Activated naive CD4-positive, alpha-beta T cell treated with anti-CD3 and anti-CD28 coated beads for 36 hours (primary cell): ENCODE measurements at regions of chr9 and their contacts with region 1.

Region 1: DNA sequence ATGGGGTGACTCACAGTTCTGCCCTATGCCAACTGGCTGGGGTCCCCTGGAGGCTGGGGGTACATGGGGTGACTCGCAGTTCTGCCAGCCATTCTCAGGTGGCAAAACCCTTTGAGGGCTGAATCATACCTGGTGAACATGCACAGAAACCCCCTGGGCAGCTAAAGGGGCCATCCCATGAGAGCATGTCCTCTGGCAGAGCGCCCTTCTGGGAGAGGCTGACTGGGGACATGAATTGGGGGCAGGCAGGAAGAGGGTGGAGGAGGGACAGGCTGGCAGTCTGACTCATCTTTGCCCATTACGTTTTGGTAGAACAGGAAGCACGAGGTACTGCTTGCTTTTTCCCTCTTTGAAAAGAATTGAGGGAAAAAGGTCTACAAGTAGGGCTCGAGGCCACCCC is 16.7 kb downstream of the TRAF1 start:
- DNase-seq: peak; percentile 89
- H3K4me3 Mint-ChIP-seq: no peak overlapping the region
- H3K27ac Mint-ChIP-seq: peak overlapping the region; percentile 94
- H3K4me1 Mint-ChIP-seq: peaks cover 91% of the 10 kb centered on the region
- H3K27me3 Mint-ChIP-seq: no peaks in the 10 kb centered on the region

Region 2: DNA sequence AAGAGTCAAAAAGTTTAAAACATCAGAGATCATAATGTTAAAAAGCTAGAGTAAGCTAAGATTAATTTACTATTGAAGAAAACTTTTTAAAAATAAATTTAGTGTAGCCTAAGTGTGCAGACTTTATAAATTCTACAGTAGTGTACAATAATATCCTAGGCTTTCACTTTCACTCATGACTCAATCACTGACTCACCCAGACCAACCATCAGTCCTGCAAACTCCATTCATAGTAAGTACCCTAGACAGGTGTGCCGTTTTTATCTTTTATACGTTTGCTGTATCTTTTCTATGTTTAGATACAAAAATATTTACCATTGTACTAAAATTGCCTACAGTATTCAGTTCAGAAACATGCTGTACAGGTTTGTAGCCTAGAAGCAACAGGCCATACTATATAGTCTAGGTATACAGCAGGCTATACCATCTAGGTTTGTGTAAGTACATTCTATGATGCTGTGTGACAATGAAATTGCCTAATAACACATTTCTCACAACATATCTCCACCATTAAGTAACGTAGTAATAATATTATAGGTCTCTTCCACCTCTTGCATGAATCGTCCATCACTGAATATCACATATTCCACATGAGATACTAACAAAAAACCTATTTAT is 254.8 kb before region 1 on chr9:
- CTCF ChIA-PET with region 1: no interaction called
- intact Hi-C with region 1: no loop called
- DNase-seq: no peak
- H3K4me3 Mint-ChIP-seq: no peak overlapping the region
- H3K27ac Mint-ChIP-seq: no peak overlapping the region
- H3K4me1 Mint-ChIP-seq: peaks cover 2% of the 10 kb centered on the region
- H3K27me3 Mint-ChIP-seq: no peaks in the 10 kb centered on the region

Region 3: GRCh38 chr9:120875954-120876841 is 33.7 kb before region 1 on chr9:
- CTCF ChIA-PET with region 1: interaction called, 3 read pairs
- intact Hi-C with region 1: loop called (anchors 1 kb)
- DNase-seq: peak; percentile 98
- H3K4me3 Mint-ChIP-seq: peak overlapping the region; percentile 85
- H3K27ac Mint-ChIP-seq: peak overlapping the region; percentile 98
- H3K4me1 Mint-ChIP-seq: peaks cover 75% of the 10 kb centered on the region
- H3K27me3 Mint-ChIP-seq: no peaks in the 10 kb centered on the region

Region 4: GRCh38 chr9:120925535-120926396 is 15.9 kb after region 1 on chr9:
- CTCF ChIA-PET with region 1: interaction called, 9 read pairs
- intact Hi-C with region 1: loop called (anchors 1 kb)
- DNase-seq: peak; percentile 97
- H3K4me3 Mint-ChIP-seq: peak overlapping the region; percentile 92
- H3K27ac Mint-ChIP-seq: peak overlapping the region; percentile 98
- H3K4me1 Mint-ChIP-seq: peaks cover 74% of the 10 kb centered on the region
- H3K27me3 Mint-ChIP-seq: no peaks in the 10 kb centered on the region

Region 5: DNA sequence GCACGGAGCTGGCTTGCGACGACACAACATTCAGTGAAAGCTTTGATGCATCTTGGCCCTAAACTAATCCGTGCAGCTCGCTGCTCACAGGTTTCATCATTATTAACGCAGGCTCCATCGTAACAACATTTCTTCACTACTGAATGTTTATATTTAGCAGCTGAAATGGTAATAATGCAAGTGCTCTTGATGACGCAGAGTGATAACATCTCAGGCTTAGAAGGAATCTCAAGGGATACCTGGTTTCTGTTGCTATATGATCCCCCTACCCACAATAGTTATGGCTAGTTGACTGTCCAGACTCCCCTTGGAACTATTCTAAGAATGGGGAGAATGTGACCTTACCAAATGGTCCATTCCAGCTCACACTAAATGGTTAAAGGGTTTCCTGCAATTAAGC is 104.0 kb after region 1 on chr9:
- CTCF ChIA-PET with region 1: no interaction called
- intact Hi-C with region 1: no loop called
- DNase-seq: no peak
- H3K4me3 Mint-ChIP-seq: no peak overlapping the region
- H3K27ac Mint-ChIP-seq: no peak overlapping the region
- H3K4me1 Mint-ChIP-seq: no peaks in the 10 kb centered on the region
- H3K27me3 Mint-ChIP-seq: no peaks in the 10 kb centered on the region

Region 6: DNA sequence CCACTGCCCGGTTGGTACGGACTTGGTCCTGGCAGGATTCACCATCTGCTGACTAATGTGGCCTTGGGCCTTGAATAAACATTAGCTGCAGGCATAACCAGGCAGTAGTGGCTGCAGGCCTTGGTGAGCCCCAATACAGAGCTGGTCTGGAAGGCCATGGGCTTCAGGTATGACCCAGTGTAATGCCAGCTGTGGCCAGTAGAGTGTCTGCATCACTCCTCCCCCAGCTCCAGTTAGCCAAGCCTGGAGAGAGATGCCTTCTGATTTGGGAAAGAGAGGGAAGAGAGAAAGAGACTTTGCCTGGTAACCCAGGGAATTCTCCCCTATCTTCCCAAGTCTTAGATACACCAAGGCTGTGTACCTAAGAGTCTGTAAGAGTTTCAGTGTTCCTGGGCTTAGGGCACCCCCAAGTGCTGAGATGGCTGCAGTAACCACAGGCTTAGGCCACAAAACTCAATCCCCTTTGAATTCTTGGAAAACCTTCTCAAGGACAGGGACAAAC is 145.8 kb after region 1 on chr9:
- CTCF ChIA-PET with region 1: no interaction called
- intact Hi-C with region 1: no loop called
- DNase-seq: no peak
- H3K4me3 Mint-ChIP-seq: no peak overlapping the region
- H3K27ac Mint-ChIP-seq: no peak overlapping the region
- H3K4me1 Mint-ChIP-seq: no peaks in the 10 kb centered on the region
- H3K27me3 Mint-ChIP-seq: no peaks in the 10 kb centered on the region

Region 7: DNA sequence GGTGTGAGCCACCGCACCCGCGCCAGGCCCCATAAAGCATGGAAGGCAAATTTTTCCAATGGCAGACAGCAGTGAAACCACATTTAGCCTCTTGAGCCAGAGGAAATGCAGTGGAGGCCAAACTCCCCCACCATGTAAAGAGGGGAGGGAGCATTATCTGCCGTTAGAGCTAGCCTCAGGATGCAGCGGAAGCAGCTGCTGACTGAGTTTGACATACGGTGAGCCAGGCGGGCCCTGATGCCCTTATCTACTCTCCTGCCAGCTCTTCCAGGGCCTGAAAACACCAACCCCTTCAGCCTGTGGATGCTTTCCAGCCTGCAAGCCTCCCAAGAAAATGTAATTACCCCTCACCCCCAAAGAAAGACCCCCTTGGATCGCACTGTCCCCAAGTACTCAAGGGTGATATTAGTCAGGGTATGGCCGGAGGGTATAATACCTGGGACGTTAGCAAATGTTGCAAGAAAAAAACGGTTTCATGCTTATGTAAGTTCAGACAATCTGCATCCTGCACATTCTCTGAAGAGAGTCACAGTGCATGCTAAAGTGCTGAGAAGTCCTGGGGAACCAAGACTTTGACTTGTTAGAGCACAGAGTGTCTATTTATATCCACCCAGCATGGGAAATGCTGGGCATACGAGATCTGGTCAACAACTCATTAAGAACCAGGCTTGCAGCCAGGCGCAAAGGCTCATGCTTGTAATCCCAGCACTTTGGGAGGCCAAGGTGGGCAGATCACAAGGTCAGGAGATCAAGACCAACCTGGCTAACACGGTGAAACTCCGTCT is 601.1 kb after region 1 on chr9:
- CTCF ChIA-PET with region 1: no interaction called
- intact Hi-C with region 1: no loop called
- DNase-seq: no peak
- H3K4me3 Mint-ChIP-seq: no peak overlapping the region
- H3K27ac Mint-ChIP-seq: no peak overlapping the region
- H3K4me1 Mint-ChIP-seq: no peaks in the 10 kb centered on the region
- H3K27me3 Mint-ChIP-seq: peaks cover 7% of the 10 kb centered on the region